ENCODE measurements at regions of chr19 and their contacts with region 1.

Region 1: DNA sequence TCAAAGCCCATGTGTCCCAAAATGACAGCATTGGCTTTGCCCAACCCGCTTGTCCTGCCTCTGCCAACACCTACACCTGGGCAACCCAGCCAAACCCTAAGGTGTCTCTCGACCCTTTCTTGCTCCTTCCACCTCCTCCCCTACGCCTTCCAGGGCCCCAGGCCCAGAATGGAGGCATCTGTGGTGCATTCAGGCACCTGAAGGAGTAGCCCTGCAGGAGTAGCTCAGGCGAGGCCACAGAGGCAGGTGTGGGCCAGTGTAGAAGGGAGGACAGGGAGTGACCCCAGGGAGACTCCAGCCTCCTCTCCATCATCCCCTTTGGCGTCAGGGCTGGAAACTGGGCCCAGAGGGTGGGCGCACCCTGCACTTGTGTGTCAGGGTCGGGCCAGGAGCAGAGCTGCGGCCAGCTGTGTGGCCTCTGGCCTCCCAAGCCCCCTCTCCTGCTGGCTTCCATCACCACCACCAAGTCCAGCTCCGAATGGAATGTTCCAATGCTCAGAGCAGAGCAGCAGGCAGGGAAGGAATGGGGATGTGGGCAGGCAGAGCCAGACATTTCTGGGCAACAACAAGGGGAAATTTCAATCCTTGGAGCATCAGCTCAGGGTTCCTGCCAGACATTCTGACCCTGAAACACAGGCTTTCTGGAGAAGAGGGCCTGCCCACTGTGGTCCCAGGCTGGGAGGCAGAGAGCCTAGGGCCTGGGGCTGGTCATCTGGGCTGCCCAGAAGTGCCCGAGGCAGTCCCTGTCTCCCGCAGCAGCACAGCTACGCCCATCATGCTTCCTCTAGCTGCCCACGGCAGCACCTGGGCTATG is 16.4 kb downstream of the PLEKHF1 start:
- DNase-seq: peak in 1 of 2 donors; percentile 64
- H3K4me3 ChIP-seq: no peak overlapping the region
- H3K27ac ChIP-seq: peak overlapping the region; percentile 76 to 87
- H3K4me1 ChIP-seq: peaks cover 25 to 64% of the 10 kb centered on the region in 2 donors
- H3K27me3 ChIP-seq: no peaks in the 10 kb centered on the region
- CTCF ChIP-seq: no peak
- POLR2A ChIP-seq: no peak

Region 2: DNA sequence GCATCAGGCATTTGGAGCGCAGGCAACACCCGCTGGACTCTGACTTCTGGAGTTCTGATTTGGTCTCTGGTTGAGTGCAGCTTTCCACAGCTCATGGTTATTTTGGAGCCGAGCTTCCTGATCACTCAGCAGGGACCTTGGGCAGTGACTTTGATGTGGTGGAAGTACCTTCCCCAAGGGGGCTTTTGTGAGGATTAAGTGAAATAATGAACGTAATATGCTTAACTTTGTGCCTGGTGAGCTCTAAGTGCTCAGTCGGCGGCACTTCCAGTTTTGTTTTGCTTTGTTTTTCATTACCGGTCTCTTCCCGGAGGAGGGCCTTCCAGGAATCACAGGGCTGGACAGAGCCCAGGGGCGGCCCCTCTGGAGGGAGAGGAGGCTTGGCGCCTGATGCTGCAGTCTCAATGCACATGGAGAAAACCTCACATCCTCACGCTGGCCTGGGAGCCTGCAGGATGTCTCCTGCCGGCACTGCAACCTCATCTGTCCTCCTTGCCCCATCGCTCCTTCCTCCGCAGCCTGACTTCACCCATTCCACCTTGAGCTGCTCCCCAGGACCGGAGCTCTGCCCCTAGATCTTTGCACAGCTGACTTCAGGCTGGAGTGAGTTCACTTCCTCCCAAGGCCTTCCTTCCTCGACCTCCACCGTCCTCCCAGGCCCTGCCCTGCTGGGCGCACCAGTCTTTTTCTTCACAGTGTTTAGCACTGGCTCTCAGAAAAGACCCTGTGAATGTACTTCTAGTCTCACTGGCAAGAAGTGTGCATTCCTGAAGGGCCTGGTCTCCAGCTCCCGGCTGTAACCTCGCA is 14.8 kb before region 1 on chr19:
- intact Hi-C with region 1: loop called (anchors 1 kb)
- DNase-seq: peak; percentile 62 to 67
- H3K4me3 ChIP-seq: peak overlapping the region; percentile 88 to 98 (median 96)
- H3K27ac ChIP-seq: peak overlapping the region; percentile 91 to 98
- H3K4me1 ChIP-seq: peaks cover 36 to 48% of the 10 kb centered on the region in 2 donors
- H3K27me3 ChIP-seq: no peaks in the 10 kb centered on the region
- CTCF ChIP-seq: no peak
- POLR2A ChIP-seq: no peak